ENCODE measurements at regions of chr17 and their contacts with region 1.

Region 1: GRCh38 chr17:30477083-30477773 is at the start of gene GOSR1:
- DNase-seq: peak; percentile 87
- CTCF ChIP-seq: peak; percentile 80

Region 2: DNA sequence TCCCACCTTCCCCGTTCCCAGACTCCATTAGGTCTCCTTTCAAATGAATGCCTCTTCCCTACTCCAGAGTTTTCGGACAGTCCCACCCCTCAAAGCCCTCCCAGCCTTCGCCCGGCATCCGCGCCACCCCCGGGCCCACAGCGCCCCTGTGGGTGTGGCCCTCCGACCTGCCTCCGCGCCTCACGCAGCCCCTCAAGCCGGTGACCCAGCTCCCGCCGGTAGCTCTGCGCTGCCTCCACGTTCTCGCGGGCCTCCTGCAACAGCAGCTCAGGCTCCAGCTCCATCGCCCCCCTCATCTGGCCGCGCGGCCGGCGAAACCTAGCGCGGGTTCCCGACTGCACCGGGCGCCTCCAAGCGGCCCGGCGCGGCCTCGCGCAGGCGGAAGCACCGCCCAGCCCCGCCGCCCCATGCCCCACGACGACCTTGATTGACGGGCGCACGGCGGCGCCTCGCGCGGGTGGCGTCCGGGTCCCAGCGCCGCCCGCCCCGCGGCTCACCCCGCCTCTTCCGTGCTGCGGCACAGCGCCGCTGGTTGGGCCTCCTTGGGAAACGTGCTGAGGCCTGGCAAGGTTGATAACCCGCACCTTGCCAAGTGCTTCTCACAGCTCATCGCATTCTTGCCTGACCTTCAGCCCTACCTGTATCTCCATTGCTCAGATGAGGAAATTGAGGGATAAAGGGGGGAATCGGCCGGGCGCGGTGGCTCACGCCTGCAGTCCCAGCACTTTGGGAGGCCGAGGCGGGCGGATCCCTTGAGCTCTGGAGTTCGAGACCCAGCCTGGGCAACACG is 347.3 kb after region 1 on chr17 and contains the start of gene CRLF3:
- in situ Hi-C with region 1: loop called (anchors 25 kb)
- DNase-seq: peak; percentile 98
- CTCF ChIP-seq: peak; percentile 64